ENCODE measurements at regions of chr4 and their contacts with region 1.

Region 1: GRCh38 chr4:41882625-41883347 is 52.4 kb upstream of the TMEM33 start:
- DNase-seq: peak; percentile 59
- H3K4me3 ChIP-seq: peak overlapping the region; percentile 57
- H3K27ac ChIP-seq: no peak overlapping the region
- H3K4me1 ChIP-seq: no peaks in the 10 kb centered on the region
- H3K27me3 ChIP-seq: peaks cover 67% of the 10 kb centered on the region

Region 2: GRCh38 chr4:41281038-41281634 is 601.6 kb before region 1 on chr4:
- in situ Hi-C with region 1: loop called (anchors 10 kb)
- DNase-seq: peak; percentile 83
- H3K4me3 ChIP-seq: no peak overlapping the region
- H3K27ac ChIP-seq: no peak overlapping the region
- H3K4me1 ChIP-seq: peaks cover 8% of the 10 kb centered on the region
- H3K27me3 ChIP-seq: no peaks in the 10 kb centered on the region

Region 3: GRCh38 chr4:41692717-41693345 is 190.0 kb before region 1 on chr4:
- in situ Hi-C with region 1: loop called (anchors 10 kb)
- DNase-seq: peak; percentile 74
- H3K4me3 ChIP-seq: no peak overlapping the region
- H3K27ac ChIP-seq: no peak overlapping the region
- H3K4me1 ChIP-seq: no peaks in the 10 kb centered on the region
- H3K27me3 ChIP-seq: no peaks in the 10 kb centered on the region